ENCODE measurements at regions of chr6 and their contacts with region 1.

Region 1: DNA sequence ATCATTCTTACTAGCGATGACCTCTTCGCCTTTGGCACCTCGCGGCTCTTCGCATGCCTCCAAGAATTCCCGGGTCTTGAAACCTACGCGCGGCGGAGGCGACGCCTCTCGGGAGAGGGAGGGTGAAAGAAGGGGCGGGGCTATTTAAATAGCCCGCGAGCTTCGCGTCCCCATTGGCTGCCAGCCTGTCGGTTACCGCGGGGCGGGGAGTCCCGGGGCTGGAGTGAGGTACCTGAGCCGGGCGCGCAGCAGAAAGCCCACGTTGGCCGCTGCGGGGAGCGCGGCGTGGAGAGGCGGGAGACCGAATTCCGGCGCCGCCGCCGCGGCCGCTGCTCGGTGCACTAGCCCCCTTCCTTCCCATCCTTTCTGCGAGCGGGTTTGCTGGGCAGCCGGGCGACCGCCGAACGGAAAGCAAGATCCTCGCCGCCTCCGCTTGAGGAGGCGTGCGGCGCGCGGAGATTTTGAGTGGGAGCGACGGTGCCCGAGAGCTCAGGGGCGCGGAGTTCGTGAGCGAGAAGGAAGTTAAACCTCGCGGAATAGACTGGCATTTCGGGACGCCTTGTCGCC is at the start of gene BMP6:
- DNase-seq: peak; percentile 96
- H3K4me3 ChIP-seq: peak within 1 kb of the TSS; percentile 77
- H3K27ac ChIP-seq: no peak within 1 kb of the TSS
- H3K4me1 ChIP-seq: peaks cover 25% of the 10 kb centered on the region
- H3K27me3 ChIP-seq: no peaks in the 10 kb centered on the region
- total RNA-seq, gene BMP6: 4.6 and 10.3 TPM in 2 replicates

Region 2: DNA sequence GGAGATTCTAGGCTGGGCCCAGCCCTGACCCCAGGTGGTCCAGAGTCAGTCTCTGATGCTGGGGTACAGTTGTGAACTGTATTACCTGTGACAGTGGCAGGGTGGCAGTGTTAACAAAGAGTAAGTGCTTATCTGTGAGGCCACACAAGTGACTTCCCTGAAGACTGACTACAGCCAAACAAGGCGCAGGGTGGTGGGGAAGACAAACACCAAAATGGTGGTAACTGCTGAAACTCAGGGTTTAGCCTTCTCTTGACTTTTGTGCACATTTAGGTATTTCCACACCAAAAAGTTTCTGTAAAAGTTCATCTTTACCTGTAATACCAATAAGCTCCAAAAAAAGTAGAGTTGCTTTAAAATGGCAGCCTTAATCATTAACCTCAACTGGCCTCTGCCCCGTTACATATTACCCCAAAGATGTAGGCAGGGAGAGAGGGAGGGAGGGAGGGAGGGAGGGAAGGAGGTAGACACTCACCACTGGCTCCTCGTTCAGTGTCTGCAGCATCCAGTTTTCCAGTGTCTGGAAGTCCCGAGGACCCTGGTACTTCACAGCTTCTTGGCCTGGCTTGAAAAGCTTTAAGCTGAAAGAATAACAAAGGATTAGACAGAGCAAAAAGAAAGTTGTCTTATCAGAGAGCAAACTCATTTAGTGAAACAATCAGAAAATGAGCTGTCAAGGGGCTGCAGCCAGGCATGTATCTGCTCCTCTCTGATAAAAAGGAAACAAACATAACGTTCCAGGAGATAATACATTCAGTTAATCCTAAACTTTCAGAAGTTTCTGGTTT is 173.4 kb after region 1 on chr6:
- in situ Hi-C with region 1: loop called (anchors 10 kb)
- DNase-seq: no peak
- H3K4me3 ChIP-seq: no peak overlapping the region
- H3K27ac ChIP-seq: no peak overlapping the region
- H3K4me1 ChIP-seq: no peaks in the 10 kb centered on the region
- H3K27me3 ChIP-seq: no peaks in the 10 kb centered on the region

Region 3: DNA sequence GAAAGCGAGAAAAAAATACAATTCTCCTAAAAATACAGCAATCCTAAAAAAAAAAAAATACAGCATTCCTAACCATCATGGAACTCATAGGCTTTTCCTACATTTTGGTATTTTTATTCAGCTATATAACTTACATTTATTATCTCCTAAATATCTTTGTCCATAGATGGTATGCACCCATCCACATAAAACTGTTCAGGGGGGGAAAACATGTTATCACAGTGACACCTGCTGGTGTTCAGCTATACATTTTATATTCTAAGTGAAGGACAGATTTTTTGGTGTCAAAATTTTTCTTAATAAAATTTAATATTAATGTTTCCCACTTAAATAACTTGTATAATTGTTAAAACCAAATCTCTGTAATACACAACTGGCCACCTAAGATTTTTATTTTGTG is 280.3 kb after region 1 on chr6:
- in situ Hi-C with region 1: loop called (anchors 10 kb)
- DNase-seq: peak; percentile 68
- H3K4me3 ChIP-seq: no peak overlapping the region
- H3K27ac ChIP-seq: no peak overlapping the region
- H3K4me1 ChIP-seq: no peaks in the 10 kb centered on the region
- H3K27me3 ChIP-seq: no peaks in the 10 kb centered on the region

Region 4: GRCh38 chr6:8123236-8123635 is 397.3 kb after region 1 on chr6:
- in situ Hi-C with region 1: no loop called
- DNase-seq: no peak
- H3K4me3 ChIP-seq: no peak overlapping the region
- H3K27ac ChIP-seq: no peak overlapping the region
- H3K4me1 ChIP-seq: no peaks in the 10 kb centered on the region
- H3K27me3 ChIP-seq: no peaks in the 10 kb centered on the region; the same call in 1 of the 2 replicates